HepG2 (cell line): ENCODE measurements at regions of chr1 and their contacts with region 1.

Region 1: DNA sequence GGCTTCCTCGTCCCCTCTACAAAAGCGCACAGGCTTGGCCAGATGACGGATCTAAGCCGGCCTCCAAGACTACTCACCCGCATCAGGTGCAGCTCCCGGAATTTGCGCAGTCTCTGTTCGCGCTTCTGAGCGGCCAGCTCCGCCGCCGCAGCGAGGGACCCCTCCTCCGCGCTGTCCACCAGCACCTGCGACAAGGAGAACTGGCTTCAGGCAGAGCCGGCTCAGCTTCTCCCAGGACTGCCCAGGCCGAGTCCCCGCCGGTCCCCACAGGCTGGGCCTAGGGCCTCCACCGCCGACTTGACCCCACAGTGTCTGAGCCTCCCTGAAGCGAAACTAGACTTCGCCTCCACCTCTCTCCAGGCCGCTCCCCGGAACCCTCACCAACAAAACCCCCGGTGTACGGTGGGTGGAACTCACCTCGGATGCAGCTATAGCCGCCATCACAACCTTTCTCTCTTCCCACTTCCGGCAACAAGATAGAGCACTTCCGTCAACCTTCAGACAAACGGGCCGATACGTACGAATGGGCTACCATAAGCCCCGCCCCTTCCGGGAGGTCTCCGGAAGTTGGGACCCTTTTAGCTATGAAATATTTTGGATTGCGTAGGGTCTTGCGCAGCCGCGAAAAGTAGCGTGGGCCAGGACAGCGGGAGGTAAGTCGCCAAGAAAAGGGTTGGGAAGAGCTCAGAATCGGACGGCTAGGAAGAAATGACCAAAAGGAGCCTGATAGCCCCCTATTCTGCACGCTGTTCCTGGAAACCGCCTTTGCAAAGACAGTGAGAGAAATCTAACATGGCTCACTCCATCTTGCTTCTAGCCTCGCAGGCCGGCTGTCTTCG is at the start of gene SYF2:
- DNase-seq: peak; percentile 93
- ATAC-seq: peak; percentile 95
- H3K4me3 ChIP-seq: peak within 1 kb of the TSS; percentile 74 to 86 (median 84)
- H3K27ac ChIP-seq: peak within 1 kb of the TSS; percentile 82
- H3K4me1 ChIP-seq: peaks cover 21% of the 10 kb centered on the region
- H3K27me3 ChIP-seq: no peaks in the 10 kb centered on the region
- CTCF ChIP-seq: no peak
- EP300 ChIP-seq: no peak
- POLR2A ChIP-seq: peak; percentile 64 to 65
- RAD21 ChIP-seq: no peak; the same call in 1 of the 2 replicates
- total RNA-seq, gene SYF2: 34.1 and 42.8 TPM in 2 replicates

Region 2: GRCh38 chr1:25198663-25199252 is 33.5 kb before region 1 on chr1:
- CTCF ChIA-PET with region 1: no interaction called
- POLR2A ChIA-PET with region 1: interaction called, 10 read pairs
- in situ Hi-C with region 1: no loop called
- intact Hi-C with region 1: loop called (anchors 1 kb)
- DNase-seq: peak; percentile 54
- ATAC-seq: peak; percentile 70
- H3K4me3 ChIP-seq: no peak overlapping the region
- H3K27ac ChIP-seq: no peak overlapping the region
- H3K4me1 ChIP-seq: peaks cover 79% of the 10 kb centered on the region
- H3K27me3 ChIP-seq: no peaks in the 10 kb centered on the region
- CTCF ChIP-seq: no peak
- EP300 ChIP-seq: no peak
- POLR2A ChIP-seq: no peak
- RAD21 ChIP-seq: 0 out of 2 replicates have a peak, but pooled peaks have one; percentile 22

Region 3: GRCh38 chr1:25212725-25213124 is 19.5 kb before region 1 on chr1:
- CTCF ChIA-PET with region 1: no interaction called
- POLR2A ChIA-PET with region 1: interaction called, 12 read pairs
- in situ Hi-C with region 1: no loop called
- intact Hi-C with region 1: no loop called
- DNase-seq: peak; percentile 61
- ATAC-seq: no peak; the same call in 2 of the 3 replicates
- H3K4me3 ChIP-seq: peak overlapping the region in 1 of 3 experiments; percentile 0; a peak in 2 of 6 replicates
- H3K27ac ChIP-seq: peak overlapping the region; percentile 48
- H3K4me1 ChIP-seq: peaks cover 42% of the 10 kb centered on the region
- H3K27me3 ChIP-seq: no peaks in the 10 kb centered on the region; a peak in 1 of 5 replicates
- CTCF ChIP-seq: no peak
- EP300 ChIP-seq: peak in 1 of 2 experiments; percentile 27; a peak in 1 of 4 replicates
- POLR2A ChIP-seq: no peak
- RAD21 ChIP-seq: no peak

Region 4: GRCh38 chr1:25247024-25247828 is 15.0 kb after region 1 on chr1 and contains the start of gene RSRP1:
- CTCF ChIA-PET with region 1: no interaction called
- POLR2A ChIA-PET with region 1: interaction called, 59 read pairs
- in situ Hi-C with region 1: no loop called
- intact Hi-C with region 1: no loop called
- DNase-seq: peak; percentile 96
- ATAC-seq: peak; percentile 84
- H3K4me3 ChIP-seq: peak within 1 kb of the TSS; percentile 68 to 96 (median 93)
- H3K27ac ChIP-seq: peak within 1 kb of the TSS; percentile 84
- H3K4me1 ChIP-seq: peaks cover 32% of the 10 kb centered on the region
- H3K27me3 ChIP-seq: no peaks in the 10 kb centered on the region; a peak in 1 of 5 replicates
- CTCF ChIP-seq: no peak
- EP300 ChIP-seq: peak in 1 of 2 experiments; percentile 1; a peak in 1 of 4 replicates
- POLR2A ChIP-seq: peak; percentile 100
- RAD21 ChIP-seq: 0 out of 2 replicates have a peak, but pooled peaks have one; percentile 28
- total RNA-seq, gene RSRP1: 11.3 and 52.8 TPM in 2 replicates